Aorta (tissue), 5 donors: ENCODE measurements at regions of chr18 and their contacts with region 1.

Region 1: GRCh38 chr18:47748847-47749599 is 181.4 kb downstream of the SMAD2 start:
- DNase-seq: peak; percentile 79 to 95
- ATAC-seq: peak; percentile 95
- H3K4me3 ChIP-seq: peak overlapping the region in 1 of 2 donors; percentile 22
- H3K27ac ChIP-seq: no peak overlapping the region
- H3K4me1 ChIP-seq: no peaks in the 10 kb centered on the region
- H3K27me3 ChIP-seq: no peaks in the 10 kb centered on the region

Region 2: GRCh38 chr18:47050468-47050867 is 698.6 kb before region 1 on chr18:
- intact Hi-C with region 1: loop called in 1 of 2 experiments (anchors 5 kb)
- DNase-seq: no peak
- ATAC-seq: no peak
- H3K4me3 ChIP-seq: no peak overlapping the region
- H3K27ac ChIP-seq: no peak overlapping the region
- H3K4me1 ChIP-seq: no peaks in the 10 kb centered on the region
- H3K27me3 ChIP-seq: no peaks in the 10 kb centered on the region

Region 3: GRCh38 chr18:47100214-47100831 is 648.7 kb before region 1 on chr18:
- intact Hi-C with region 1: loop called (anchors 5 kb)
- DNase-seq: no peak
- ATAC-seq: no peak
- H3K4me3 ChIP-seq: no peak overlapping the region
- H3K27ac ChIP-seq: no peak overlapping the region
- H3K4me1 ChIP-seq: no peaks in the 10 kb centered on the region
- H3K27me3 ChIP-seq: no peaks in the 10 kb centered on the region

Region 4: GRCh38 chr18:47215554-47216138 is 533.4 kb before region 1 on chr18:
- intact Hi-C with region 1: loop called (anchors 5 to 10 kb)
- DNase-seq: no peak
- ATAC-seq: no peak
- H3K4me3 ChIP-seq: no peak overlapping the region
- H3K27ac ChIP-seq: no peak overlapping the region
- H3K4me1 ChIP-seq: no peaks in the 10 kb centered on the region
- H3K27me3 ChIP-seq: no peaks in the 10 kb centered on the region